ENCODE measurements at regions of chr10 and their contacts with region 1.

Region 1: DNA sequence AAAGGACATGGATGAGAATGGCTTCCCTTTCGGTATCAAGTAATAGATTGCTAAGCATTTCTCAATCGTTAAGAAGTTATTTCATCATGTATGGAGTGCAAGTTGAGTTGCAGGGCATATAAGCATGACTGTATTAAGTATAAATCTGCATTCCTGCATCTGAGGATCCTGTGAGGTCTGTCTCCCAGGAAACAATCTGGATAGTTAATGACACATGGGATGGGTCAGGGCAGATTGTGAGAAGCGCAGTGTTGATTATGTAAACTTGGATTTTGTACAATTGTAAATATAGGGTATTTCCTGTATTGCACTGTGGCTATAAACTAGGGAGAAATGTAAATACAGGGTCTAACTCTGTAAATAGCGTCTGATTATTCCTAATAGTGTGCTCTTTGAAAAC is 102.6 kb downstream of the PLXDC2 start:
- DNase-seq: no peak
- ATAC-seq: peak; percentile 46

Region 2: DNA sequence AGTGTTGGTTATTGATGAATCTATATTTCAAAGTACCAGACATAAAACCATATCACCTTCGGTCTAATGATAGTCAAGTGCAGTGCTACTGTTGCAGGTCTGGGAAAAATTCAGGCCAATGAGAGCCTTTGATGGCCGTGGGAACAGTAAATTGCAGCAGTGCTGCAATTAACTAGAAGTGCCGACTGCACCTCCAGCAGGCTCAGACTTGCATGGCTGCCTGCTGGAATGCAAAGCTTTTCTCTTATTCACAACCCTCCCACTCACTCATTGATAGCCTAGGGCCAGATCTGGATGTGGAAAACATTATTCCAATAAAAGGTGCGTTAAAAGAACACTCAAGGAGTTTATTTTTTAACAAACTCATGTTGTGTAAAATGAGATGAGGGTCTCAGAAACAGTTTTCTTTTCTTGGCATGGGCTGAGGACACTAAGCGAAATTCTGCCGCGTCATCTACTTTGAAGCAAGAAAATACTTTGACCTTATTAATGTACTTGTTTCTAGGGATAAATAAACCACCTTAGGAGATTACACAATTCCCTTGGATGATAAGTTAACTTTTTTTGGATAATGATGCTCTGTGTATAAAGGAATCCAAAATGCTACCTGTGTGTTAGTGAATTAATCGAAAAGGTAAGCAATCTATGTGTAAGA is 85.5 kb before region 1 on chr10:
- intact Hi-C with region 1: loop called in 1 of 2 experiments (anchors 10 kb)
- DNase-seq: no peak
- ATAC-seq: no peak

Region 3: DNA sequence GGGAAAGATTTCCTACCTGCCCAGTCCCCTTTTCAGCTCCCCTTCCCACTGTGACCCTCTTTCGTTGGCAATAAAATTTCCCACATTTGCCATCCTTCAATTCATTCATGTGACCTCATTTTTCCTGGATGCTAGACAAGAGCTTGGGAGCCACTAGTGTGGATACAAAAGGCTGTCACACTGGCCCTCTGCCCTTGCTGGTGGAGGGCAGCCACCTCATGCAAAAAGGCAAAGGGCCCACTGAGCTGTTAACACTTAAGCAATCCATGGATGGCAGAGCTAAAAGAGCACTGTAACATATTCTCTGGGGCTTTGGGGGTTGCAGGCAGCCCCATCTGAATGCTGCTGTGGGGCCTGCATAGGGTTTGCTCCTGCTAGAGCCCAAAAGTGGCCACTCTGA is 663.2 kb after region 1 on chr10:
- intact Hi-C with region 1: no loop called
- DNase-seq: no peak
- ATAC-seq: no peak

Measured in left colon (tissue), 2 donors.